ENCODE measurements at regions of chr4 and their contacts with region 1.

Region 1: GRCh38 chr4:185217408-185217975 is 8.1 kb downstream of the SNX25 start:
- DNase-seq: no peak
- H3K4me3 Mint-ChIP-seq: no peak overlapping the region
- H3K27ac Mint-ChIP-seq: no peak overlapping the region
- H3K4me1 Mint-ChIP-seq: peaks cover 34% of the 10 kb centered on the region
- H3K27me3 Mint-ChIP-seq: no peaks in the 10 kb centered on the region

Region 2: GRCh38 chr4:185238215-185238681 is 20.8 kb after region 1 on chr4:
- CTCF ChIA-PET with region 1: no interaction called
- POLR2A ChIA-PET with region 1: no interaction called
- intact Hi-C with region 1: loop called (anchors 2 kb)
- DNase-seq: peak; percentile 64
- H3K4me3 Mint-ChIP-seq: peak overlapping the region; percentile 49
- H3K27ac Mint-ChIP-seq: peak overlapping the region; percentile 68
- H3K4me1 Mint-ChIP-seq: peaks cover 33% of the 10 kb centered on the region
- H3K27me3 Mint-ChIP-seq: no peaks in the 10 kb centered on the region

Region 3: DNA sequence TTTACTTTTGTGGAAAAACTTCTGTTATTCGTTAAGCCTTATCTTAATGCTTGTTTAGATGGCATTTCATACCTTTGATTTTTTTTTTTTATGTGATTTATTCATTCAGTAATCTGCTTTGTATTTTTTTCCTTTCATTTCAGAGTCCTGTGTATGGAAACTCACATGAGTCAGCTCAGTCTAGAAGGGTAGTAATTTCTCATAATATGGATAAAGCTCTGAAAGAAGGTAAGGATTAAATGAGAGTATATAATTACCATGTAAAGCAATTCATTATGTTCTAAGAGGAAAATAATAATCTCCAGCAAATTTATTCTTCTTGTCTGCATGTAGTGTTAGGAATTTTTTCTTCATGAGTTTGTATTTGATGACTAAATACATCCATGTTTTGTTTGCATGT is 29.7 kb after region 1 on chr4:
- CTCF ChIA-PET with region 1: no interaction called
- POLR2A ChIA-PET with region 1: no interaction called
- intact Hi-C with region 1: loop called (anchors 2 kb)
- DNase-seq: no peak
- H3K4me3 Mint-ChIP-seq: no peak overlapping the region
- H3K27ac Mint-ChIP-seq: peak overlapping the region; percentile 38
- H3K4me1 Mint-ChIP-seq: peaks cover 41% of the 10 kb centered on the region
- H3K27me3 Mint-ChIP-seq: no peaks in the 10 kb centered on the region

Measured in activated CD4-positive, alpha-beta memory T cell treated with anti-CD3 and anti-CD28 coated beads for 36 hours (primary cell).